Caco-2 (cell line): ENCODE measurements at regions of chr7 and their contacts with region 1.

Region 1: GRCh38 chr7:5243261-5243660 is 39.5 kb upstream of the SLC29A4 start:
- DNase-seq: no peak
- H3K4me3 ChIP-seq: no peak overlapping the region
- H3K4me3 Mint-ChIP-seq: no peak overlapping the region
- H3K27ac Mint-ChIP-seq: no peak overlapping the region
- H3K4me1 ChIP-seq: peaks cover 6% of the 10 kb centered on the region; the same call in 1 of the 2 replicates
- H3K4me1 Mint-ChIP-seq: no peaks in the 10 kb centered on the region
- H3K27me3 ChIP-seq: no peaks in the 10 kb centered on the region
- H3K27me3 Mint-ChIP-seq: no peaks in the 10 kb centered on the region
- CTCF ChIP-seq: no peak

Region 2: DNA sequence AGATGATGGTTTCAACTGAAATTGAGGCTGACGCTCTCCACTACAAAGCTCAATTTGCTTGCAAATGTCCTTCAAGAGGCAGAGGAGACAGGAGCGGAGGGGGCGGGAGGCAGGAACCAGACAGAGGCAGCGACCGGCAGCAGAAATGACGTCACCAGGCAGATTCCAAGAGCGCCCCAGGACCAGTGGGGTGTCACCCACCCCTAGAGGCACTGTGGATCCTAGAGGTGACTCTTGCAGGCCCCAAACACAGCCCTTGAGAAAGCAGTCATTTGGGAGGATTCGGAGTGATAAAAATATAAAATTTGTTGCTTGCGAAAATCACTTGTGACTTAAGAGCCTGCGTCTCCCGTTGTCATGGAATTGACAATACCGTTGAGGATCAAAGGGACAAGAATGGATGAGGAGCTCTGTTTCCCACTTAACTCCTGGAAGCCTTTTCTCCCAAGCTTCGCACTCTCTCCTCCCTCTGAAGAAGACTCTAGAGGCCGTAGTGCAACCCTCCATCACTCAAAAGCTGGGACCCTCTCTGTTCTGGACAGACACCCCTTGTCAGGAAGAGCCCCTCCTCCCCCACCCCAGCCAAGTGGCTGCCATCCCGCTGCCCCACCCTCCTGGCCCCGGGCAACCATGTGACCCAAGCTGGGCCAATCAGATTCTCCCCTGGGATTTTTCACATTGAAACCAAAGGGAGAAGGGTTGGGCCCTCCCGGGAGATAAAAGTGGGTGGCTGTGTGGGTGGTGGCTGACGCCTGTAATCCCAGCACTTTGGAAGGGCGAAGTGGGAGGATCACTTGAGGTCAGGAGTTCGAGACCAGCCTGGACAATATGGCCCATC is 23.1 kb after region 1 on chr7:
- CTCF ChIA-PET with region 1: no interaction called
- POLR2A ChIA-PET with region 1: no interaction called
- intact Hi-C with region 1: no loop called
- DNase-seq: no peak
- H3K4me3 ChIP-seq: no peak overlapping the region
- H3K4me3 Mint-ChIP-seq: no peak overlapping the region
- H3K27ac Mint-ChIP-seq: no peak overlapping the region
- H3K4me1 ChIP-seq: no peaks in the 10 kb centered on the region
- H3K4me1 Mint-ChIP-seq: no peaks in the 10 kb centered on the region
- H3K27me3 ChIP-seq: no peaks in the 10 kb centered on the region
- H3K27me3 Mint-ChIP-seq: no peaks in the 10 kb centered on the region
- CTCF ChIP-seq: no peak

Region 3: DNA sequence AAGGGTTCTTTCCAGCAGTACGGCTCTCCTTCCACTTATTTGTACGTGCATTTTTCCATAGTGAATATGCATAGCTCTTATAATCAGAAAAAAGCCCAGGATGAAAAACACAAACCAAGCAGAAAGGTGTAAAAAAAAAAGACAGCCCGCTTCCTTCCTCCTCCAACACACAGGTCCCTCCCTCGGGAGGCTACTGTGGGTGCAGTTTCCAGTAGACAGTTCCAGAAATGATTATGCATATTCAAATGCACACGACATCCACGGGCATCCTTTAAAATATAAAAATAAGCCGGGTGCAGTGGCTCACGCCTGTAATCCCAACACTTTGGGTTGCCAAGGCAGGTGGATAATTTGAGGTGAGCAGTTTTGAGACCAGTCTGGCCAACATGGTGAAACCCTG is 120.5 kb after region 1 on chr7:
- CTCF ChIA-PET with region 1: interaction called, 8 read pairs
- POLR2A ChIA-PET with region 1: interaction called, 6 read pairs
- intact Hi-C with region 1: loop called (anchors 5 kb)
- DNase-seq: no peak
- H3K4me3 ChIP-seq: no peak overlapping the region
- H3K4me3 Mint-ChIP-seq: no peak overlapping the region
- H3K27ac Mint-ChIP-seq: no peak overlapping the region
- H3K4me1 ChIP-seq: no peaks in the 10 kb centered on the region; the same call in 1 of the 2 replicates
- H3K4me1 Mint-ChIP-seq: no peaks in the 10 kb centered on the region
- H3K27me3 ChIP-seq: no peaks in the 10 kb centered on the region
- H3K27me3 Mint-ChIP-seq: no peaks in the 10 kb centered on the region
- CTCF ChIP-seq: no peak